ENCODE measurements at regions of chr10 and their contacts with region 1.

Region 1: GRCh38 chr10:61835069-61835945 is 66.2 kb upstream of the ARID5B start:
- DNase-seq: peak in 1 of 2 donors; percentile 10
- ATAC-seq: peak; percentile 75

Region 2: GRCh38 chr10:61606951-61607907 is 228.1 kb before region 1 on chr10:
- intact Hi-C with region 1: no loop called
- DNase-seq: no peak
- ATAC-seq: no peak

Region 3: DNA sequence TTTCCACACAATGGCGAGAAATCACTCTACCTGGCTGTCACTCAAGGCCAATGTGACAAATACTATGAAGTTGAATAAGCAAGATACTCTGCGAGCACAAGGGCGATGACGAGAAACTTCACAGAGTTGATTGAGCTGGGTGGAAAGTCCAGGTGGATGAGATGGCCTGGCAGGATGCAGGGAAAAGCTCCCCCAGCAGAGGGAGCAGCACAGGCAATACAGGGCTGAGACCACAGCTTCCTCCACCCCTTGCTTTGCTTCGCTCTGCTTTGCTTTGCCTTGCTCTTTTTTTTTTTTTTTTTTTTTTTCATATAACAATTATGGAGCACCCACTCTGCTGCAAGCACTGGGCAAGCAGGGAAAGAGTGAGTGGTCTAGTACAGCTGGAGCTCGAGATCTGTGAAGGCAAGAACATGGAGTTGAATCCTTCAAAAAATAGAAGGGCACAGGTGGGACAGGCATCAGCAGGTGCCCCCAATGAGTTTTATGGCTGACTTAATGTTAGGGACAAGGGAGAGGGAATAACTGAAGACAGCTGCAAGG is 84.3 kb before region 1 on chr10:
- intact Hi-C with region 1: loop called in 1 of 2 experiments (anchors 10 kb)
- DNase-seq: peak; percentile 84 to 88
- ATAC-seq: peak; percentile 99

Measured in left colon (tissue), 2 donors.